ENCODE measurements at regions of chr7 and their contacts with region 1.

Region 1: DNA sequence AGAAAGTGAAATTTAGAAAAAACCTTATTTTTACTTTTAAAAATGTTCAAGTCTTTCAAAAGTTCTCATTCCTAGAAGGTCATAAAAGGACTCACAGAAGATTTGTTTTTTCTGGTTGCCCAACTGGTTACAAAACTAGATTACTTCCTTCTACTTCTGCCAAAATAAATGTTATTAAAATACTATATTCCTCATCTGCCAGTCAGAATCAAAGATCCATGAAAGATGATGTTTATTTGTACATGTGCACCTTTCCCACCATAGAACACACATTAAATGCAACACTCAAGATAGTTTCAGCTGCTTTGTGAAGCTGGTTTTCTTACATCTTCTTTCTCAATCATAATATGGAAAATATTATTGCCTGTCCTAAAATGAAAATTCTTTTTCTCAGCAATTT is 465.4 kb downstream of the ETV1 start:
- DNase-seq: no peak
- H3K4me3 ChIP-seq: no peak overlapping the region
- H3K27ac ChIP-seq: no peak overlapping the region
- H3K4me1 ChIP-seq: peaks cover 0 to 2% of the 10 kb centered on the region in 2 experiments; a peak in 1 of 4 replicates
- H3K27me3 ChIP-seq: no peaks in the 10 kb centered on the region
- CTCF ChIP-seq: no peak
- EP300 ChIP-seq: no peak
- RAD21 ChIP-seq: no peak

Region 2: DNA sequence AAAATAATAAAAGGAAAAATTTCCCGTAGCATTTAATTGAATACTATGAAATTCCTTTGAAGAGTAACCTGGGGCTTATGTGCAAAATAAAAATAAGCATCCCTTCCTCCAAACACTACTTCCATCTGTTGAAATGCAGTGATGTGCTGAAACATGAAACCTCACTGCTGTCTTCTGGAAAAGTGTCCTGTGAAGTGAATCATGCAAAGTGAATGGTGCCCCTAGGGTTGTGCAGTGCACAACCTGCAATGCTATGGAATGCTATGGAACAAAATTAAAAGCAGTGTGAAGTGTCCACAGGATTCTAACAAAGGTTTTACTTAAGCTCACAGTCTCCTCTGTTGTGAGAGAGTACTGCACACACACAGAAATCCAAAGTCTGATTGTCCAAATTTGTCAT is 15.5 kb before region 1 on chr7:
- CTCF ChIA-PET with region 1: interaction called, 21 read pairs
- POLR2A ChIA-PET with region 1: no interaction called
- DNase-seq: no peak
- H3K4me3 ChIP-seq: no peak overlapping the region
- H3K27ac ChIP-seq: no peak overlapping the region
- H3K4me1 ChIP-seq: no peaks in the 10 kb centered on the region; a peak in 1 of 4 replicates
- H3K27me3 ChIP-seq: no peaks in the 10 kb centered on the region
- CTCF ChIP-seq: no peak
- EP300 ChIP-seq: no peak
- RAD21 ChIP-seq: no peak

Region 3: DNA sequence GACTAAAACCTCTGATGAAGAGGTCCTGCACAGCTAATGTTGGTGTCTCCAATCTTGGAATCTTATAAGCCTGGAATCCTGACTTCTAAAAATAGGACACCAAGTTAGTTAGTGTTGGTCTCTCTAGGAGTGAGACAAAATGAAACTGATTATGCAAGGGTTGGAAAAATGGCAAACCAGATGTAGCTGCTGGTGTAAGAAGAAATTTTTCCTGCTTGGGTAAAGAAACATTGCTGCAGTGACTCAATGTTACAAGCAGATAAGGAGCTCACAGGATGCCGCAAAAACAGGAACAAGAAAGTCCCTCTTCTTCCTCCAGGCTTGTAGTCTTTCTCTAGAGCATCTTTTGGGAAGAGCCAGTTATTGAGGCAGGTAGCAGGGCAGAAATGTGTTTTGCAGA is 16.4 kb after region 1 on chr7:
- CTCF ChIA-PET with region 1: interaction called, 13 read pairs
- POLR2A ChIA-PET with region 1: no interaction called
- DNase-seq: no peak
- H3K4me3 ChIP-seq: no peak overlapping the region
- H3K27ac ChIP-seq: no peak overlapping the region
- H3K4me1 ChIP-seq: no peaks in the 10 kb centered on the region
- H3K27me3 ChIP-seq: no peaks in the 10 kb centered on the region
- CTCF ChIP-seq: no peak
- EP300 ChIP-seq: no peak
- RAD21 ChIP-seq: no peak